Heart right ventricle (tissue), 16 donors: ENCODE measurements at regions of chr1 and their contacts with region 1.

Region 1: GRCh38 chr1:241235256-241235897 is 121.6 kb downstream of the RGS7 start:
- DNase-seq: no peak
- ATAC-seq: no peak
- H3K4me3 ChIP-seq: no peak overlapping the region
- H3K27ac ChIP-seq: no peak overlapping the region
- H3K4me1 ChIP-seq: no peaks in the 10 kb centered on the region
- H3K27me3 ChIP-seq: peaks cover 0 to 9% (median 0%) of the 10 kb centered on the region in 7 donors
- CTCF ChIP-seq: no peak

Region 2: DNA sequence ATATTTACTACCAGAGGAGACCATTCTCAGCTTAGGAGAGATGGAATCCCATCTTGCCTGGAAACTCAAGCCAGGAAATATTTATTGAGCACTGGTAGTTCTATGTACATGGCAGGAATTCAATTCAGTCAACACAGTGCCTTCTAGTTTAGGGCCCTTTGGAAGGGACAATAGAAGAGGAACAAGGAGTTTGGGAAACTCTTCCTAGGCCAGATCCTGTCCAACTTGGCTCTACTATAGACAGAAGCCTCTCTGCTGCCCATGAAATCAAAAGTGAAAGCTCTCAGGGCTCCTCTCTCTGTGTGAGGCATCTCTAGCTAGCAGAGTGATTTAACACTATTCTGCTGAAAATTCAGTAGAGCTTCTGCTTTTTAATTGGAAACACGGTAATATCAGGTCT is 1008.1 kb after region 1 on chr1:
- intact Hi-C with region 1: loop called in 1 of 10 experiments (anchors 5 kb)
- DNase-seq: no peak
- ATAC-seq: peak in 3 of 8 donors; percentile 51 to 62 (median 58)
- H3K4me3 ChIP-seq: peak overlapping the region in 1 of 10 donors; percentile 11
- H3K27ac ChIP-seq: peak overlapping the region in 1 of 10 donors; percentile 42
- H3K4me1 ChIP-seq: peaks cover 0 to 3% (median 0%) of the 10 kb centered on the region in 9 donors
- H3K27me3 ChIP-seq: no peaks in the 10 kb centered on the region
- CTCF ChIP-seq: no peak